Heart right ventricle (tissue), 16 donors: ENCODE measurements at regions of chr2 and their contacts with region 1.

Region 1: GRCh38 chr2:206159346-206160124 is at the starts of genes EEF1B2 and NDUFS1:
- DNase-seq: peak; percentile 96 to 98
- ATAC-seq: peak; percentile 95 to 98 (median 97)
- H3K4me3 ChIP-seq: peak within 1 kb of the TSS; percentile 67 to 93 (median 80)
- H3K27ac ChIP-seq: peak within 1 kb of the TSS; percentile 86 to 98 (median 94)
- H3K4me1 ChIP-seq: peaks cover 15 to 50% (median 39%) of the 10 kb centered on the region in 9 donors
- H3K27me3 ChIP-seq: no peaks in the 10 kb centered on the region
- CTCF ChIP-seq: no peak
- total RNA-seq, gene EEF1B2: 218 to 306 (median 228) TPM
- total RNA-seq, gene NDUFS1: 364 to 670 (median 572) TPM

Region 2: DNA sequence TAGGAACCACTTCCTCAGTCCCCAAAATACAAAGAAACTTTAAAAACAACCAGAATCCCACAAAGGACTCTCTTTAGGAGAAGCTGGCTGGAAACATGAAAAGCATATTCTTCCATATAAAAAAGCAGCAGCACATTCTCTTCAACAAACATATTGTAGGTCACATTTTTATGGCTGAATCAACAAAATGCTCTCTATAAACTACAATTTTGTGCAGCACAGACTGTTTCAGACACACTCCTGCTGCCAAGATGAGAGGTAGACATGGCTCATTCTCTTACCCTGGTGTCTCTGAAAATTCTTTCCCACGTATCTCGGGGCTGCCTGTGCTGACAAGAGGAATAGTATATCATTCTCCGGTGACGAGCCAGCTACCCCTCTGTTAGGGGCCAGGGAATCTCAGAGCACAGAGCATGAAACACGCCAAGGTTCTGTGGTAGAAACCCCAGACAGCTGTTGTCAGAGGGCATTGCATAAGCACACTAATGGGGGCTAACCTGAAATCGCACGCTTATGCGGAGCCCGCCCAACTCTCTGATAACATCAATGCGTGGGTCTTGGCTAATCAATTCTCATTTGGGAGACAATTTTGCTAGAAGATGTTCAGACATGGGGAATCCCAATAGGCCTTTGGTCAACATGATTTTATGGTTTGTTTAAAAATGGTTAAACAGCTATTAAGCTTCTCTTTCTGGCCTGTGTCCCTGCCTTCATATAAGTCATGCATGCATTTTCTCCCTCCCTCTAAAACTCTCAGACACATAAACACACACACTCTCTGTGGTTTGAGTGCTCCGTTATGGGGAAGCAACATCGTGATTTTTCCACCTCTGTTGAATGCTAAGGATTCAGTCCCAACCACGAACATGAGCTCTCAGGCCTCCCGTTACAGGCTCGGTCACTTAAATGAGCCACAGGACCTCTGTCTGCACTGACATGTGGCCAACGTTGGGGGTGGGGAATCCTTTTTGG is 251.0 kb before region 1 on chr2:
- intact Hi-C with region 1: no loop called
- DNase-seq: no peak
- ATAC-seq: no peak
- H3K4me3 ChIP-seq: no peak overlapping the region
- H3K27ac ChIP-seq: no peak overlapping the region
- H3K4me1 ChIP-seq: no peaks in the 10 kb centered on the region
- H3K27me3 ChIP-seq: peaks cover 0 to 17% (median 0%) of the 10 kb centered on the region in 7 donors
- CTCF ChIP-seq: no peak

Region 3: DNA sequence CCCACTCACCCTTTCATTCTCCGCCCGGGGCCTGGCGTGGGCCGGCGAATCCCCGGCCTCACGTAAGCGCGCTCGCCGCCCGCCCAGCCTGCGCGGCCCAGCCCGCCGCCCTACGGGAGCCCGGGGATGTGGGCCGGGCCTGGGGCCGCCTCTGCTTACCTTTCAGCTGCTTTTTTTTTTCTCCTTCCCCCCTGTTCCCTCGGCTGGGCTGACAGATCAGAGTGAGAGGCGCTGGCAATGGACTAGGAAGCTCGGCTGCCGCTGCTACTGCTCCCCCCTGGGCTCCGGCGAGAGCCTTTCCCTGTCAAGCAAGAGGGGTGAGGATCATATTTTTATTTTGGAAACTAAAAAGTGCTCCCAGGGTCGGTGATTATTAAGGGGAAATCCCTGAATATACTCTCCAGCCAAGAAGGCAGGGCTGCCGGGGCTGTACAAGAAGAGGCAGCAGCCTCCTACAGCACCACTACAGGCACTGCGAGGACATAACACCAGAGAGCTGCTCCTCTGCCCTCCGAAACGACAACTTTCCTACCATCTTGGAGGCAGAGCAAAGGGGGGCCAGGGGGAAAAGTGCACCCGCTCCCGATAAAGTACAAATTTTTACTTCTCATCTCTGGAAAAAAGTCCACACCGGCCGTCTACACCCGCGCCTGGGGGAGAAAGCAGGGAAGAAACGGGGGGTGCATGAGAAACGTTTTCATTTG is 73.6 kb before region 1 on chr2 and contains the start of gene INO80D:
- intact Hi-C with region 1: loop called in 5 of 10 experiments (anchors 2 to 10 kb)
- DNase-seq: peak; percentile 66 to 76
- ATAC-seq: peak; percentile 83 to 93 (median 88)
- H3K4me3 ChIP-seq: peak within 1 kb of the TSS; percentile 85 to 97 (median 92)
- H3K27ac ChIP-seq: peak within 1 kb of the TSS; percentile 96 to 99 (median 98)
- H3K4me1 ChIP-seq: peaks cover 0 to 34% (median 23%) of the 10 kb centered on the region in 9 donors
- H3K27me3 ChIP-seq: no peaks in the 10 kb centered on the region
- CTCF ChIP-seq: peak in 8 of 9 donors; percentile 22 to 70 (median 53)
- total RNA-seq, gene INO80D: 12.5 to 26.3 (median 16.4) TPM

Region 4: DNA sequence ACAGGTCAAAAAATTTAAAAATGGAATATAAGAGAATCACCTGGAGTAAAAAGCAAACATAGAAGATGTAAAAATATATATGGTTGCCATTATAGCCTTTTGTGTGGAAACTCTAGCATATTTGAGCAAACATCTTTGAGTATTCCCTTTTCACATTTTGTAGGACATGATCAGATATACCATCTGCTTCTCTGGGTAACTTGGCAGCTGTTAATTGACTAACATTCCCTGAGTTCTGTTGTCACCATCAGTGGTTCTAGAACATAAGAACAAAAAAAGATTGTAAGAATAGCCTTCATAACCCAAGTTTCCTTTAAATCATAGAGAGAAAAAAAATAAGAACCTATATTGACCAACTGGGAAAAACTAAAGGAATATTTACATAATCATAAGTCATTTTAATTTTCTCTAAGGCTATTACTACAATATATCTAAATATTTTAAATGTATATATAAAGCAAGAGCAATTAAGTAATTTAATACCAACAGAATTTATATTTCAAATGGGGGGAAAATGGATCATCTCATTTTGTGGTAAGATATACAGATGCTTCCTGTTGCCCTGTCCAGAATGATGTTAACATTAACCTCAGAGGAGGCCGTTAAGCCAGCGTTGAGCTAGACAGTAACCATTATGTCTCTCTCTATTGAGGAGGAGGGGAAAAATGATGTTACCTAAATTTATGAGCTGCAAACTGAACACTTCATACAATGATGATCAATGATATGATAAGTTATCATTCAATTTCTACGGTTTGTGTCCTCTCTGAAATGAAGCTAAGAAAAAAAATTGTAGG is 63.8 kb before region 1 on chr2:
- intact Hi-C with region 1: loop called in 1 of 10 experiments (anchors 5 kb)
- DNase-seq: no peak
- ATAC-seq: no peak
- H3K4me3 ChIP-seq: no peak overlapping the region
- H3K27ac ChIP-seq: no peak overlapping the region
- H3K4me1 ChIP-seq: no peaks in the 10 kb centered on the region
- H3K27me3 ChIP-seq: no peaks in the 10 kb centered on the region
- CTCF ChIP-seq: no peak

Region 5: GRCh38 chr2:206249714-206250591 is 90.4 kb after region 1 on chr2:
- intact Hi-C with region 1: loop called in 2 of 10 experiments (anchors 10 kb)
- DNase-seq: no peak
- ATAC-seq: peak in 2 of 8 donors; percentile 46 to 64
- H3K4me3 ChIP-seq: peak overlapping the region in 6 of 10 donors; percentile 14 to 36 (median 23)
- H3K27ac ChIP-seq: no peak overlapping the region
- H3K4me1 ChIP-seq: no peaks in the 10 kb centered on the region
- H3K27me3 ChIP-seq: peaks cover 0 to 80% (median 54%) of the 10 kb centered on the region in 7 donors
- CTCF ChIP-seq: no peak

Region 6: DNA sequence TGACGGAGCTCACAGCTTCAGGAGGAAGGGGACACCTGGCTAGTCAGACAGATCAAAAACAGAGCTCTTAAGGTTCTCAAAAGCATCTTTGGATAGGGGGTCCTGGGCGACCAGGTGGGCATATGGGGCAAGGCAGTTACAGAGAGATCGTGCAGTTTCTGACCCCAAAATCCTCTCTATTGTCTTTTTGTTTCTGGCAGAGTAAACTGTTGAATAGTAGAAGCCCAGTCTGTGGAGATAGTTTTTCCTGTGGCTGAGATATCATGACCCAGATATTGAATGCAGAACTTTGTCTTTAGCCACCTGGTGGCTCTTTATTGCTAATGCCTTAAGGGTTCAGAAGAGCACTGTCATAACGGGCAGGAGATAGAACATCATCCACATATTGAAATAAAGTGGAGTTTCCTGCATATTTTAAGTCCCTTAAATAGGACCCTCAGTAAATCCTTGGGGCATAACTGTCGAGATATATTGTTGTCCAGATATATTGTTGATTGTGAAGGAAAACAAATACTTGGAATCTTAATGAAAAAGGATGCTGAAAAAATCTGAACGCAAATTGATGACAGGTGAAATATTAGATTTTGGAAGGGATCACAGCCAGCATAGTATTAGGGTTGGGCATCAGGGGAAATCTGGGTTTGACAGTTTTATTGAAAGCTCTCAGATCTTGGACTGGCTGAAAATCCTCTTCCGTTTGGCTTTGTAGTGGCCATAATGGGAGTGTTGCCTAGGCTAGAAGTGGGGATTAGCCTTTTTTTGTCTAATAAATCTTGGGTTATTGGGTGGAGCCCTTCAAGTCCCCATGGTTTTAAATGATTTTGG is 100.9 kb after region 1 on chr2:
- intact Hi-C with region 1: loop called in 5 of 10 experiments (anchors 5 to 10 kb)
- DNase-seq: no peak
- ATAC-seq: peak in 4 of 8 donors; percentile 34 to 71 (median 54)
- H3K4me3 ChIP-seq: peak overlapping the region in 2 of 10 donors; percentile 20
- H3K27ac ChIP-seq: no peak overlapping the region
- H3K4me1 ChIP-seq: no peaks in the 10 kb centered on the region
- H3K27me3 ChIP-seq: peaks cover 19 to 100% (median 100%) of the 10 kb centered on the region in 7 donors
- CTCF ChIP-seq: peak in 7 of 9 donors; percentile 7 to 48 (median 36)

Region 7: GRCh38 chr2:206432432-206433082 is 273.0 kb after region 1 on chr2:
- intact Hi-C with region 1: no loop called
- DNase-seq: no peak
- ATAC-seq: no peak
- H3K4me3 ChIP-seq: no peak overlapping the region
- H3K27ac ChIP-seq: no peak overlapping the region
- H3K4me1 ChIP-seq: no peaks in the 10 kb centered on the region
- H3K27me3 ChIP-seq: peaks cover 0 to 6% (median 0%) of the 10 kb centered on the region in 7 donors
- CTCF ChIP-seq: no peak

Region 8: DNA sequence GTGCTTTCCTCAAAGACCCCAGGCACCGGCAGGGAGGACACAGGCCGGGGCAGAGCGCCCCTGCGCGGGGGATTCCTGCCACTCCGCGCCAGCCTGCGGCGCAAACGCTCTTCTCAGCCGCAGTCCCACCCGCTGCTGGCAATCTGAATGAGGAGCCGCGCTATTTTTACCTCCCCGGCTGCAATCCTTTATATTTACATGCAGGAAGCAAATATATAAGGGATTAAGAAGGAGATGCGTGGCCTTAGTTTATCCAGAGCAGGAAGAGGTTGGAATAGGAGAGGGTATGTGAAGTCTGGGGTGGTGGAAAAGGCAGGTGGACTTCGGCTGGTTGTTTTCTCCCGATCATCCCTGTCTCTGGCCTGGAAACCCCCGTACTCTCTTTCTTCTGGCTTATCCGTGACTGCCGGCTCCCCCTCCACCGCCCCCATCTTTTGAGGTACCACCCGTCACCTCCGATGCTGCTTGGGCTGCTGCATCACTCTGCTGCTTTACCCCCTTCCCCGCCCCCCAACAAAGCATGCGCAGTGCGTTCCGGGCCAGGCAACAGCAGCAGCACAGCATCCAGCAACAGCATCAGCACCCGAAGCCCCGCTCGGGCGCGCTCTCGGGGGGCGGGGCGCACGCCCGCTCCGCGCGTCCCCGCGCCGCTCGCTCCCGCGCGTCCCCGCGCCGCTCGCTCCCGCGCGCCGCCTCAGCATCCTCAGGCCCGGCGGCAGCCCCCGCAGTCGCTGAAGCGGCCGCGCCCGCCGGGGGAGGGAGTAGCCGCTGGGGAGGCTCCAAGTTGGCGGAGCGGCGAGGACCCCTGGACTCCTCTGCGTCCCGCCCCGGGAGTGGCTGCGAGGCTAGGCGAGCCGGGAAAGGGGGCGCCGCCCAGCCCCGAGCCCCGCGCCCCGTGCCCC is 283.5 kb after region 1 on chr2 and contains the start of gene ADAM23:
- intact Hi-C with region 1: loop called in 2 of 10 experiments (anchors 5 kb)
- DNase-seq: peak; percentile 53 to 67
- ATAC-seq: peak; percentile 83 to 92 (median 88)
- H3K4me3 ChIP-seq: peak within 1 kb of the TSS; percentile 33 to 75 (median 66)
- H3K27ac ChIP-seq: peak within 1 kb of the TSS; percentile 53 to 91 (median 77)
- H3K4me1 ChIP-seq: peaks cover 3 to 46% (median 20%) of the 10 kb centered on the region in 9 donors
- H3K27me3 ChIP-seq: peaks cover 0 to 81% (median 30%) of the 10 kb centered on the region in 7 donors
- CTCF ChIP-seq: peak in 8 of 9 donors; percentile 16 to 52 (median 24)
- total RNA-seq, gene ADAM23: 51.0 to 101 (median 72.4) TPM

Region 9: DNA sequence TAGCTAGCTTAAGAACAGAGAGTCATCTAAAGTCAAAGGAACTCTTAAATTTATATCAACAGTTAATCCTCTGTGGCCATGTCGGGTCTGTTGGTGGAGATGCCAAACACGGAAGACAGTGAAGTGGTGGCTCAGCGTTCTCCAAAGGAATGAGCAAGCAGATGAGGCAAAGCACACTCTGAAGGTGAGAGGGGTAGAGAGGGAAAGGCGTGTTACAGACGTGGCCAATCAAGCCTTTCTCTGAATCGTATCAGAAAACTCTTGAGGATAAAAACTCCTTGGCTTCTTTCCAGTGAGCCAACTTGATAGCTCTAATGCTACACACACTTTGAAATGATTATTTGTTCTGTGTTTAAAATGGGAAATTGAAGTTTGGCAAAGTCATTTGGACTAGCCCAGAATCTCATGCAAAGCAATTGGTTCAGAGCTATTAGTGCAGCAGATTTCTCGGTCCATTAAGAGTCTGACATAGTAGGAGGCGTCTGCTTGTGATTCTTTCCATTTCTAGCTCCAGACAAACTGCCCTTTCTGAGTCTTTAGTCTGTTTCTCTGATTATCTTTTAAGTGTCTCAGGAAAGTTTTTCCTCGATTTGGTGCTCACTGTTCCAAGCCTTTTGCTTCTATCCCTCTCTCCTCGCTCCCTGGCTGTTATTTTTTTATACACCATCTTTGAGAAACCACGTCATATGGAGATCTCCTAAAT is 722.3 kb after region 1 on chr2:
- intact Hi-C with region 1: no loop called
- DNase-seq: no peak
- ATAC-seq: peak in 7 of 8 donors; percentile 25 to 79 (median 51)
- H3K4me3 ChIP-seq: peak overlapping the region in 5 of 10 donors; percentile 18 to 23 (median 19)
- H3K27ac ChIP-seq: peak overlapping the region in 4 of 10 donors; percentile 31 to 42 (median 32)
- H3K4me1 ChIP-seq: peaks cover 0 to 14% (median 6%) of the 10 kb centered on the region in 9 donors
- H3K27me3 ChIP-seq: no peaks in the 10 kb centered on the region
- CTCF ChIP-seq: no peak